Activated CD4-positive, alpha-beta T cell treated with anti-CD3 and anti-CD28 coated beads for 36 hours (primary cell): ENCODE measurements at regions of chr3 and their contacts with region 1.

Region 1: DNA sequence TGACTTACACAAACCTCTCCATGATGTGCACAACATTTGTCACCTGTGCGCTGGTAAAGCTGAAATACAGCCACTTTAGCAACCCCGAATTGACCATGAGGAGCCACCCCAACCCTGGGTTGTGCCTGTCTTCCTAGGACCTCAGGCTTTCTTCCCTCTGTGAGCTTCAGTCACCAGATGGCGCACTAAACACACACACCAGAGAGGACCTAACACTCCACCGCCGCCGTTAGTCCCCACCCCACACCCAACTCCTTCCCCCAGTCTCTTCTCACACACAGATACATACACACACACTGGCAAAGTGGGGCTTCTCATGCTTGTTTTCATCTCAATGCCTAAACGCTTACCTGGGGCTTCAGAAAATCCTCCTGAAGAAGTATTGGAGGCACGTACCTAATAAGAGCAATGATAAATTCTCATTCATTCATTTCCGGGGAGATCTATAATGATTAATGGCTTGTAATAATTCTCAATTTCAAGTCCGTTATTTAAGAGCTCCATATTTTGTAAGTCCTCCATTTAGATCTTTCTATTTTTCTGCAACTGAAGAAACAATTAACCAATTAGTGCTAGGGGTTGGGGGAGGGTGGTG is 2.1 kb upstream of the CCDC80 start:
- DNase-seq: peak; percentile 90
- ATAC-seq: peak; percentile 98
- H3K4me3 Mint-ChIP-seq: peak overlapping the region; percentile 48
- H3K27ac Mint-ChIP-seq: peak overlapping the region; percentile 58
- H3K4me1 Mint-ChIP-seq: peaks cover 17% of the 10 kb centered on the region
- H3K27me3 Mint-ChIP-seq: peaks cover 3% of the 10 kb centered on the region

Region 2: DNA sequence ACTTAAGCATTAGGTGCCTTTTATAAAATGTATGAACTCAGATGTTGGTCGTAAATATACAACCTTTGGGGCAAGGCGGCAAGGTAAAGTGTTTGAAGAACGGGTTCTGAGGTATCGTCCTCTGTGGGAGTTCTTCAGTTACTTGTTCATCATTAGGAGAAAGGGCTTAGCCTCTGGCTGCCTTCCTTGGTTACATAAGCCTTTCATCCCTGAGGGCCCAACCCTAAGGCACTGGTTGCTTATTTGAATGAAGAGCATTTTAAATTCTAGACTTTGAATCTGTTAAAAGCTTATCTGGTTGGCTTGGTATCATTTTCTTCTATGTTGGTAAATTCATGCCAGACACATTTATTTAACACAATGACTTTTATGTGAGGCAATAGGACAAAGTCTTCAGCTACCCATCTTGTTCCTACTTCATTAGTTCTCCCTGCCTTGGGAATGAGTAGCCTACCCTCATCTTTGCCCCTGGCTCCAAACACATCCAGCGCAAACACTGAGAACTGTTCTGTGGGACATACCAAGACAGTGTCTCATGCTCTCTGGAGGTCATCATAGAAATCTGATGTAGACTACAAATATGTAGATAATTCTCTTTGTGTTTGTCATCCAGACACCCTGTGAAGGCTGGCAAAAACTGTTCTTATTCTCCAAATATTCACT is 10.3 kb after region 1 on chr3:
- CTCF ChIA-PET with region 1: interaction called, 20 read pairs
- POLR2A ChIA-PET with region 1: no interaction called
- intact Hi-C with region 1: no loop called
- DNase-seq: no peak
- ATAC-seq: no peak
- H3K4me3 Mint-ChIP-seq: no peak overlapping the region
- H3K27ac Mint-ChIP-seq: no peak overlapping the region
- H3K4me1 Mint-ChIP-seq: peaks cover 10% of the 10 kb centered on the region
- H3K27me3 Mint-ChIP-seq: peaks cover 2% of the 10 kb centered on the region

Region 3: DNA sequence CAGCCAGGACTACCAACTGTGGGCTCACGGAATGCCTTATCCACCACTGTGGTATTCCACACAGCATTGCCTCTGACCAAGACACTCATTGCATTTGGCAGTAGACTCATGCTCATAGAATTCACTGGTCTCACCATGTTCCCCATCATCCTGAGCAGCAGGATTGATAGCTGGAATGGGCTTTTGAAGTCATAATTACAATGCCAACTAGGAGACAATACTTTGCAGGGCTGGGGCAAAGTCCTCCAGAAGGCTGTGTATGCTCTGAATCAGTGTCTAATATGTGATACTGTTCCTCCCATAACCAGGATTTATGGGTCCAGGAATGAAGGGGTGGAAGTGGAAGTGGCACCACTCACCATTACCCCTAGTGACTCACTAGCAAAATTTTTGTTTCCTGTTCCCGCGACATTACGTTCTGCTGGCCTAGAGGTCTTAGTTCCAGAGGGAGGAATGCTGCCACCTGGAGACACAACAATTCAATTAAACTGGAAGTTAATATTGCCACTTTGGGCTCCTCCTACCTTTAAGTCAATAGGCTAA is 56.5 kb after region 1 on chr3:
- CTCF ChIA-PET with region 1: interaction called, 3 read pairs
- POLR2A ChIA-PET with region 1: no interaction called
- intact Hi-C with region 1: loop called in 1 of 2 experiments (anchors 2 kb)
- DNase-seq: no peak
- ATAC-seq: no peak
- H3K4me3 Mint-ChIP-seq: no peak overlapping the region
- H3K27ac Mint-ChIP-seq: no peak overlapping the region
- H3K4me1 Mint-ChIP-seq: no peaks in the 10 kb centered on the region
- H3K27me3 Mint-ChIP-seq: peaks cover 6% of the 10 kb centered on the region

Region 4: DNA sequence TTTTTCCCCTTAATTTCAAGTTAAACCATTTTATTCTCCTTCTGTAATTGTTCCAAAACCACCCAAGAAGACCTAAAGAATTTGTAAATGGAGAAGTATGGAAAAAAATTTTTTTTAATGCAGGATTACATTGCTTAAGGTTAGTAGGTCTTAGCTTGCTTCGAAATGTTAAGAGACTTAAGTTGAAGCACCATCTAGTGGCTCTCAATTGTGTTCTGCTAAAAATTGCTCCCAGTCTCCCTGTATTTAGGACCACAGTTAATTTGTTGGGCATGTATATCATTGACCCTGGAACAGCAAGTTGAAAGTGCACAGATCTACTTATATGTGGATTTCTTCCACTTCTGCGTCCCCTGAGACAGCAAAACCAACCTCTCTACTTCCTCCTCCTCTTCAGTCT is 171.3 kb after region 1 on chr3:
- CTCF ChIA-PET with region 1: interaction called, 4 read pairs
- POLR2A ChIA-PET with region 1: no interaction called
- intact Hi-C with region 1: loop called (anchors 1 kb)
- DNase-seq: no peak
- ATAC-seq: no peak
- H3K4me3 Mint-ChIP-seq: no peak overlapping the region
- H3K27ac Mint-ChIP-seq: no peak overlapping the region
- H3K4me1 Mint-ChIP-seq: peaks cover 10% of the 10 kb centered on the region
- H3K27me3 Mint-ChIP-seq: no peaks in the 10 kb centered on the region

Region 5: GRCh38 chr3:112979240-112979832 is 336.3 kb after region 1 on chr3:
- CTCF ChIA-PET with region 1: interaction called, 37 read pairs
- POLR2A ChIA-PET with region 1: interaction called, 3 read pairs
- intact Hi-C with region 1: loop called (anchors 1 kb)
- DNase-seq: no peak
- ATAC-seq: no peak
- H3K4me3 Mint-ChIP-seq: no peak overlapping the region
- H3K27ac Mint-ChIP-seq: no peak overlapping the region
- H3K4me1 Mint-ChIP-seq: peaks cover 73% of the 10 kb centered on the region
- H3K27me3 Mint-ChIP-seq: no peaks in the 10 kb centered on the region

Region 6: DNA sequence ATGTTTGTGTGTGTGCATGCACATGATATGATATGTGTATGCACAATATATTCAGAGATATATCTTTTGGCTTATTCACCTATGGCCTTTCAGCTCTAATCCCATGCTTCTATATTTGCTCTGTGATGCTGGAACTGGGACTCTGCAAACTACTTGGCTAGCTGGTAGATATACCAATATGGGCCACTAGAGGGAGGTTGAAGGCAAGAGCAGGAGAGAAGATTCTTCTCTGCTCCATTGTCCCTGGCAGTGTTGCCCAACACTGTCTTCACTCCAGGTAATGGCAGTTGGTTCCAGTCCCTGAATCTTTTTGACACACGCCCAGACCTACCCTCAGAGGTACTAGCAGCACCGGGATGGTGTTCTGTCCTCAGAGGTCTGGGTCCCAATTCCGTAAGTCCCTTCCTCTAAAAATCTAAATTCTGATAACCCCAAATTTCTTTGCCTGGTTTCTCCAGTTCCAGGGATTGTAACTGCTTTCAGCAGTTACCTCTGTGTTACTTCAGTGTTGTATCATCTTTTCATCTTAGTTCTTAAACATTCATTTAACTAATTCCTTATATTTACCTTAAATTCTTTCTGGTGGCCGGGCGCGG is 392.5 kb after region 1 on chr3:
- CTCF ChIA-PET with region 1: interaction called, 14 read pairs
- POLR2A ChIA-PET with region 1: no interaction called
- intact Hi-C with region 1: loop called in 1 of 2 experiments (anchors 1 kb)
- DNase-seq: peak; percentile 31
- ATAC-seq: peak; percentile 73
- H3K4me3 Mint-ChIP-seq: no peak overlapping the region
- H3K27ac Mint-ChIP-seq: no peak overlapping the region
- H3K4me1 Mint-ChIP-seq: no peaks in the 10 kb centered on the region
- H3K27me3 Mint-ChIP-seq: no peaks in the 10 kb centered on the region

Region 7: GRCh38 chr3:113051302-113051711 is 408.3 kb after region 1 on chr3:
- CTCF ChIA-PET with region 1: no interaction called
- POLR2A ChIA-PET with region 1: no interaction called
- intact Hi-C with region 1: no loop called
- DNase-seq: peak; percentile 92
- ATAC-seq: peak; percentile 95
- H3K4me3 Mint-ChIP-seq: no peak overlapping the region
- H3K27ac Mint-ChIP-seq: no peak overlapping the region
- H3K4me1 Mint-ChIP-seq: peaks cover 2% of the 10 kb centered on the region
- H3K27me3 Mint-ChIP-seq: no peaks in the 10 kb centered on the region